ENCODE measurements at regions of chr11 and their contacts with region 1.

Region 1: GRCh38 chr11:57667736-57668435 is at the start of gene ZDHHC5:
- DNase-seq: peak; percentile 98 to 100
- H3K4me3 ChIP-seq: peak within 1 kb of the TSS; percentile 84
- H3K27ac ChIP-seq: peak within 1 kb of the TSS; percentile 91
- H3K4me1 ChIP-seq: peaks cover 26% of the 10 kb centered on the region
- H3K27me3 ChIP-seq: no peaks in the 10 kb centered on the region
- CTCF ChIP-seq: peak; percentile 56; the same call in 1 of the 2 replicates
- total RNA-seq, gene ZDHHC5: 94.2 and 101 TPM in 2 replicates

Region 2: GRCh38 chr11:57288771-57289579 is 378.9 kb before region 1 on chr11:
- CTCF ChIA-PET with region 1: no interaction called
- POLR2A ChIA-PET with region 1: no interaction called
- intact Hi-C with region 1: no loop called
- DNase-seq: no peak
- H3K4me3 ChIP-seq: no peak overlapping the region
- H3K27ac ChIP-seq: no peak overlapping the region
- H3K4me1 ChIP-seq: peaks cover 11% of the 10 kb centered on the region
- H3K27me3 ChIP-seq: no peaks in the 10 kb centered on the region
- CTCF ChIP-seq: no peak

Region 3: GRCh38 chr11:57324886-57325734 is 342.8 kb before region 1 on chr11 and contains the start of gene TNKS1BP1:
- CTCF ChIA-PET with region 1: interaction called, 7 read pairs
- POLR2A ChIA-PET with region 1: no interaction called
- intact Hi-C with region 1: loop called (anchors 10 kb)
- DNase-seq: peak; percentile 94 to 99
- H3K4me3 ChIP-seq: peak within 1 kb of the TSS; percentile 57
- H3K27ac ChIP-seq: peak within 1 kb of the TSS; percentile 93
- H3K4me1 ChIP-seq: peaks cover 49% of the 10 kb centered on the region
- H3K27me3 ChIP-seq: no peaks in the 10 kb centered on the region
- CTCF ChIP-seq: no peak
- total RNA-seq, gene TNKS1BP1: 181 and 218 TPM in 2 replicates

Region 4: GRCh38 chr11:57741132-57742086 is 73.5 kb after region 1 on chr11 and contains the start of gene SELENOH:
- CTCF ChIA-PET with region 1: no interaction called
- POLR2A ChIA-PET with region 1: no interaction called
- intact Hi-C with region 1: loop called (anchors 1 kb)
- DNase-seq: peak; percentile 92 to 99
- H3K4me3 ChIP-seq: peak within 1 kb of the TSS; percentile 67
- H3K27ac ChIP-seq: peak within 1 kb of the TSS; percentile 64
- H3K4me1 ChIP-seq: peaks cover 14% of the 10 kb centered on the region
- H3K27me3 ChIP-seq: no peaks in the 10 kb centered on the region
- CTCF ChIP-seq: no peak
- total RNA-seq, gene SELENOH: 211 and 318 TPM in 2 replicates

Region 5: DNA sequence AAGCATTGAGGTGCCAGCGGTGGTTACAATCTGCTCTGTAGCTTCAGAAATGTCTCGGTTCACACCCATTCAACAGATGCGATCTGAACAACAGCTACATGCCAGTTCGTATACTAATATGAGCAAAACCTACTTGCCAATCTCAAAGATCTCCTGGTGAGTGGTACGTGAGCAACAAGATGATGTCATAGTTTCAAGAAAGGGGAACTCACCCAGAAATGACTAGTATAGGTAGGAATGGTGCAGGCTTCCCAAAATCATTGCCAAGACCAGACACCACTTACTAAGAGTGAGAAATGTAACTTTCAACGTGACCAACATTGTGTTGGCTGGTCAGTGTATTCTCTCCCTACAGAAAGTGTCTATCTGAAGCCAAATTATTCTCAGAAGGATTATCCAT is 393.9 kb after region 1 on chr11:
- CTCF ChIA-PET with region 1: no interaction called
- POLR2A ChIA-PET with region 1: no interaction called
- intact Hi-C with region 1: loop called (anchors 5 kb)
- DNase-seq: no peak
- H3K4me3 ChIP-seq: no peak overlapping the region
- H3K27ac ChIP-seq: no peak overlapping the region
- H3K4me1 ChIP-seq: no peaks in the 10 kb centered on the region
- H3K27me3 ChIP-seq: no peaks in the 10 kb centered on the region; the same call in 1 of the 2 replicates
- CTCF ChIP-seq: no peak

Region 6: DNA sequence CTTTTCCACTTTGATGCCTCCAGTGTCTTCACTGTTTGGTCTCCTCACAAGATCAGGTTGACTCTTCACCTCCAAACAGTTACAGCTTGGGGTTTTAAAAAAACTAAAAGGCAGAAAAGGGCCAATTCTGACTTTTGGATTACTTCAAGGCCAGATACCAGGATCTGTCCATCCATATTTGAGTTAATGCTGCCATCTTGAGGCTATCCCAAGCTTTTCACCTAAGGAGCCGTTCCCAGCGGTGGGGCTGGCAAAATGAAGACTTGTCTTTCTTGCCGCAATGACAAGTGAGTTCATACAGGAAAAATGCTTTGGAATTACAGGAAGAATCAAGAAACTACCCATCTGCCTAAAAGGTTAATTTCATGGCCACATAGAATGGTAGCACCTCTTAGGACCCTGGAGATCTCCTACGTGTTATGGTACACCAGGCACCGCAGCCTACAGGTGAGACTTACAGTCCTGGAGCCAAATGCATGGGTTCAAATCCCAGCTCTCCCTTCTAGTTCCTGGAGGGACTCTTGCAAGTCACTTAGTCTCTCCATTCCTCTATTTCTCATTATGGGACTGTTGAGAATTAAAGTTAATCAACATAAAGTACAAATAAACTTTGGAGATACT is 846.0 kb after region 1 on chr11:
- CTCF ChIA-PET with region 1: no interaction called
- POLR2A ChIA-PET with region 1: no interaction called
- intact Hi-C with region 1: loop called (anchors 5 kb)
- DNase-seq: peak; percentile 65 to 67
- H3K4me3 ChIP-seq: no peak overlapping the region
- H3K27ac ChIP-seq: no peak overlapping the region
- H3K4me1 ChIP-seq: no peaks in the 10 kb centered on the region
- H3K27me3 ChIP-seq: 0 out of 2 replicates have a peak, but pooled peaks cover 3% of the 10 kb centered on the region
- CTCF ChIP-seq: peak; percentile 87

Region 7: GRCh38 chr11:59142530-59143507 is 1474.9 kb after region 1 on chr11 and contains the start of gene FAM111A:
- CTCF ChIA-PET with region 1: interaction called, 3 read pairs
- POLR2A ChIA-PET with region 1: interaction called, 3 read pairs
- intact Hi-C with region 1: loop called (anchors 10 kb)
- DNase-seq: peak; percentile 91 to 94
- H3K4me3 ChIP-seq: peak within 1 kb of the TSS; percentile 72
- H3K27ac ChIP-seq: peak within 1 kb of the TSS; percentile 61
- H3K4me1 ChIP-seq: peaks cover 37% of the 10 kb centered on the region
- H3K27me3 ChIP-seq: no peaks in the 10 kb centered on the region
- CTCF ChIP-seq: no peak; the same call in 1 of the 2 replicates
- total RNA-seq, gene FAM111A: 57.8 and 95.3 TPM in 2 replicates